Left cardiac atrium (tissue), 4 donors: ENCODE measurements at regions of chr2 and their contacts with region 1.

Region 1: DNA sequence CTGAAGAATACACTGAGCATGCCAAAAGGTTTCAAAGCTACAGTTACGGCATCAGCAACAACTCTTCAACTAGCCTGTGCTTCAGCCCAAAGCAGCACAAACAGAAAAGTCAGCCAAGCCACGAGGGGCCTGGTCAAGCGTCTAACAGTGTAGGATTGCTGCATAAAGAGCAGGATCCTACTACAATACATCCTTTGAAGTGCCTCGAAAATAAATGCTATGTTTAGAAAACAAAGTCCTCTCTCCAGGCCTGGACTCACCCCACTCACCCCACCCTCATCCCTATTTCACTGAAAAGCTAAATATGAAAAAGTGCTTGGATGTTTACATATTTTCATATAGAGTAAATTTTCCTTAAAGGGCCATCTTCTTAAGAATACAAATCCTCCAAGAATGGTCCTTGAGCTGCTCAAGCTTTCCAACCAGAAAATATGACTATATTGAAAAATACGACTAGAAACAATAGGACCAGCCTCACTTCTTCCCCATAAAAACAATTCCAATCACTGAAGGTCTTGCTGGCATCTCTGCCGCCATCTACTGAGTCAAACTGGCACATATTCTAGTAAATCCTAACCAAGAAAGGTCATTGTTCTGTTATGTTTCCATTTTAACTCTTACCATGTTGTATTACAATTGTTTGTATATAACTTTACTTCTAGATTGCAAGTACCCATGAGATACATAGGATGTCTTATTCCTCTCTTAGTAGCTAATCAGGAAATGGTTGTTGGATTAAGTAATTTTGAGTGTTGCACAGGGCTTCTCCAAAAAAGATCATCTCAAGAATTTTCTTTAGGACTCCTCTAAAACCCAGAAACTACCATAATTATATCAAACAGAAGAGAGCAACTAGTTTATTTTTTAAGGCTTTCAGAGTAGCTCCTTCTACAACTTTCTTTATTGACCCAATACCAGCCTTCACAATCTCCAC is 63.6 kb downstream of the CLHC1 start:
- DNase-seq: peak; percentile 48
- ATAC-seq: peak; percentile 73 to 83

Region 2: DNA sequence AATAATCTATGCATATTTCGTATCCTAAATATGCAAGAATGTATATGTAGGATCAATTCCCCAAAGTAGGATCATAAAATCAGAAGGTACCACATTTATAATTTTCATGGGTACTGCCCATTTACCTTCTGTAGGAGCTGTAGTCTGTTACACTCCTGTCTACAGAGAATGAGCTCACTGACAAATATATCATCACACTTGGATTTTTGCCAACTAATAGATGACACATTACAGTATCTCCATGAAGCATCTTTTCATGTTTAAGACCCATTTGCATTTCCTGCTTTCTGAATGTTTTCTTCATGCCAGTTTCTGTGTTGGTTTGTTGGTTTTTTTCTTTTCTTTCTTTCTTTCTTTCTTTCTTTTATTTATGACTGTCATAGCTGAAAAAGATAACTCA is 515.9 kb before region 1 on chr2:
- intact Hi-C with region 1: no loop called
- DNase-seq: no peak
- ATAC-seq: no peak

Region 3: GRCh38 chr2:54871457-54872107 is 296.9 kb before region 1 on chr2:
- intact Hi-C with region 1: no loop called
- DNase-seq: no peak
- ATAC-seq: no peak

Region 4: DNA sequence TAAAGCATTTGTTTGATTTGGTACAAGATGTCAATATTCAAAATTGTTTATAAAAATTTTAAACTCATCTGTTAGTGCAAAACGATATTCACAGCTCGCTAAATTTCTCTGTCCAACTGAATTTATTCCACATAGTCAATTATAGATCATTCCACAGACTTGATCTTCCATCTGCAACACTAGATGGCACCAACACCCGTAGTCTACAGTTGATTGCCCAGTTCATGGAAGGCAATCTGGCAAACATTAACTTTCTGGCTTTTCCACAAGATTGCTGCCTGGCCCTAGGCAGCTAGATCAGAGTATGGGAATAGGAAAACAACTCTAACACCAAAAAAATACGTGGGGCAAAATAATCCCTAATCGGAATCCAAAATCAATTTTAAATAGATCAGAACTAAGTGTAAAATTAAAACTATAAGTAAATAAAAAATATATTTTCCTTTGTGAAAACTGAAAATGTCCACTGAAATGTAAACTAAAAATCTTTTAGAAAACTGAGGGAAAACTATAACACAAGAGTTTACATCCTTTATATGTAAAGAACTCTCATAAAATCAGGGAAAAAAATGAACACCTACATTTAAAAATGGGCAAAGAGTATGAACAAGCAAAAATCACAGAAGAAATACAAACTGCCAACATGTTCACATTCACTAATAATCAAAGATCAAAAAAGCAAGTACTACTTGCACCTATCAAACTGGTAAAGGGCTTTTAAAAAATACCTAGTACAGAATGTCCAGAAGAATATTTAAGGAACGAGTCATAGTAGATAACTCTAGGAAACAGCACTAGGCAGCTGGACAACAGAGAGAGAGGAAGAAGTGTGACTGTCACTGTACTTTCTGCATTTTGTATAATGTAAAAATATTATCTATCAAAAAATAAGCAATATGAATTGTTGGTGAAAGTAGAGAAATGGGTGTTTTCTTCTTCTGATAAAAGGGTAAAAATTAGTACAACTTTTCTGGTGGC is 153.2 kb before region 1 on chr2:
- intact Hi-C with region 1: loop called in 1 of 2 experiments (anchors 2 kb)
- DNase-seq: peak; percentile 24
- ATAC-seq: peak; percentile 75 to 81

Region 5: GRCh38 chr2:55049043-55049793 is 119.3 kb before region 1 on chr2:
- intact Hi-C with region 1: loop called (anchors 10 kb)
- DNase-seq: peak; percentile 91
- ATAC-seq: peak; percentile 59 to 64